Activated B cell treated with CpG ODN at 0.5 μM for 24 hours (primary cell): ENCODE measurements at regions of chr20 and their contacts with region 1.

Region 1: GRCh38 chr20:36919715-36920333 is 31.7 kb downstream of the SAMHD1 start:
- DNase-seq: no peak
- ATAC-seq: peak; percentile 71
- H3K4me3 Mint-ChIP-seq: no peak overlapping the region
- H3K27ac Mint-ChIP-seq: no peak overlapping the region
- H3K4me1 Mint-ChIP-seq: no peaks in the 10 kb centered on the region
- H3K27me3 Mint-ChIP-seq: no peaks in the 10 kb centered on the region
- CTCF ChIP-seq: peak; percentile 91

Region 2: DNA sequence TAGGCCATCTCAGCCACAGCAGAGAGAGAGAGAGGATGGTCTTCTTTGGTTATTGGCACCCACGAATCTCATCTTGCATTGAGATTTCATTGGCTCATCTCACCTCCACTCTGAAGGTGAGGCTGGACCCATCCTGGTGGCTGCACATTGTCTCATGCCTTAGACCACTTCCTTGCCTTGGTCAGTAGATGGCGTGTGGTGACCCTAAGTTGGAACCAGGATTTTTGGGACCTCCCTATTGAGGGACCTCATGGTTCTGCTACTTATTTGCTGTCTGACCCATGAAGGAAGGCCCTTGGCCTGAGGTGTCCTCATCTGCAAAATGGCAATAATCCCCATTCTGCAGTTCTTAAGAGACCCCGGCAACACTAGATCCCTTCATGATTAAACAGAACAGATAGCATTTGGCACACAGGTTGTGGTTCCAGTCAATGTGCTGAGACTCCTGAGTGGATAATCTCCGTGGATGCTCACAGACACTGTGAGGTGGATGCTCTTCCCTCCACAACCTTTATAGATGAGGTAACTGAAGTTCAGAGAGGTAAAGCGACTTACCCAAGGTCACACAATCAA is 705.1 kb before region 1 on chr20:
- CTCF ChIA-PET with region 1: interaction called, 3 read pairs
- POLR2A ChIA-PET with region 1: no interaction called
- intact Hi-C with region 1: loop called (anchors 1 kb)
- DNase-seq: no peak
- ATAC-seq: peak; percentile 49
- H3K4me3 Mint-ChIP-seq: no peak overlapping the region
- H3K27ac Mint-ChIP-seq: no peak overlapping the region
- H3K4me1 Mint-ChIP-seq: no peaks in the 10 kb centered on the region
- H3K27me3 Mint-ChIP-seq: peaks cover 2% of the 10 kb centered on the region
- CTCF ChIP-seq: peak; percentile 34